HCT116 (cell line): ENCODE measurements at regions of chr1 and their contacts with region 1.

Region 1: DNA sequence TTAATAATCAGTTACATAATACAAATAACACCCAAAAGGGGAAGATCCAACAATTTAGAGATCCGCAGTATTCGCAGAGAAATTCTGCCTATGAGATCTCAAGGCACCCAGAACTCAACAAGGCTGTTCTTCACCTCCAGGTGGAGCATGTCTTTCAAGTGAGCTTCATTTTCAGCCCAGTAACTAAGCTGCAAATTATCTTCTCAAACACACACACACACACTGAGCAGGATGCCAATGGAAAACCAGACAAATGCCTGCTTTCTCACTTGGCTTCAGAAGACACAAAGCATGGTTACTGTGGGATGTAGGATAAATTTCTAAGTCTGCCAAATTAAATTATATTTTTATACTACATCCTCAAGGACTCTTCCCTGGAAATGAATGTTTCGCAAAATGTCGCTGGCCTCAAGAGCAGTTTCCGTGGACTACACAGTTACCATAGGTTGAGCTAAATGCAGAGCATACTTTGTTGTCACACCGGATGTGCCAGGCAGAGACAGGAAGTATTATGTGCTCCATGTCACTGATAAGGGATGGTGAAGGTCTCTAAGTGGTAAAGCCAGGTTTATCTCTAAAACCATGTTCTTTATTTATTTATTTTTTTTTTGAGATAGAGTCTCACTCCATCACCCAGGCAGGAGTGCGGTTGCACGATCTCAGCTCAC is 30.3 kb downstream of the UBR4 start:
- DNase-seq: peak; percentile 3
- ATAC-seq: peak; percentile 74
- H3K4me3 ChIP-seq: no peak overlapping the region
- H3K27ac ChIP-seq: no peak overlapping the region
- H3K4me1 ChIP-seq: no peaks in the 10 kb centered on the region
- H3K27me3 ChIP-seq: no peaks in the 10 kb centered on the region
- CTCF ChIP-seq: peak; percentile 26 to 46 (median 40); a peak in 5 of 6 replicates
- POLR2A ChIP-seq: no peak
- RAD21 ChIP-seq: no peak

Region 2: DNA sequence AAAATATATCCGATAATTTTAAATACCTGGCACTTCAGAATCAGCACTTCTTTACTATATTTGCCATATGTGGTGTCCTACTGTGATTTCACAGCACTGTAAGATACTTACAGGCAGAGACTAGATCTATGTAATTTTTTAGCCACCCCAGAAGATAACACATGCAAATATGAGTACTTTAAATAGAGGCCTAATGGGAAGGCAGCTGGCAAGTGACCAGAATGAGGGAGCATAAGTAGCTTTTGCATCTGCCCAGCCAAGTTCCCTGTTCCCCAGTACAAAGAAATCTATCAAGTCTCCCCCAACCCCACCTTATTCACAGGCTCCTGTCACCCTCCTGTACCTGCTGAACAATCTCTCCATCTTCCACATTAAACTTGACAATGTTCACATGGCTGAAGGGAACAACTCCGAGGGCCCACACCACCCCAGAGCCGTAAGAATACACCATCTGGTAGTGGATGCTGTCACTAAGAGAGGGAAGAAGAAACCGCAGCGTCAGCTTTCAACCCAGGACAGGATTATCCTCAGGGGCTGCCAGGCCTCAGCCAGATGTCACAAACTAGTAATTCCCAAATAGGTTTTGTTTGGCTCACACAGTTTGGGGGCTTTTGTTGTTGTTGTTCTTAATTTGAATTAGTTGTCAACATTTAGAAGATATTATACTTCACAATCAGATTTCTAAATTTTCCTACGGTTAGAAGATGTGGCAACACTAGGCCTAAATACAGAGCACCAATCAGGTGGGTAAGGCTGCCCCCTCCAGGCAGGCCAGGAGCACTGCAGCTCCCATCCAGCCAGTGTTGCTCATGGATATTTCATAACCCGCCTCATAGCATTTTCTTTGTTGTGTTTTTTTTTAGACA is 61.2 kb after region 1 on chr1:
- CTCF ChIA-PET with region 1: interaction called, 4 read pairs
- POLR2A ChIA-PET with region 1: no interaction called
- RAD21 ChIA-PET with region 1: no interaction called
- intact Hi-C with region 1: loop called (anchors 1 kb)
- DNase-seq: peak; percentile 18
- ATAC-seq: peak; percentile 95
- H3K4me3 ChIP-seq: no peak overlapping the region
- H3K27ac ChIP-seq: no peak overlapping the region
- H3K4me1 ChIP-seq: no peaks in the 10 kb centered on the region
- H3K27me3 ChIP-seq: no peaks in the 10 kb centered on the region
- CTCF ChIP-seq: peak; percentile 72 to 96 (median 92)
- POLR2A ChIP-seq: no peak
- RAD21 ChIP-seq: peak; percentile 81

Region 3: DNA sequence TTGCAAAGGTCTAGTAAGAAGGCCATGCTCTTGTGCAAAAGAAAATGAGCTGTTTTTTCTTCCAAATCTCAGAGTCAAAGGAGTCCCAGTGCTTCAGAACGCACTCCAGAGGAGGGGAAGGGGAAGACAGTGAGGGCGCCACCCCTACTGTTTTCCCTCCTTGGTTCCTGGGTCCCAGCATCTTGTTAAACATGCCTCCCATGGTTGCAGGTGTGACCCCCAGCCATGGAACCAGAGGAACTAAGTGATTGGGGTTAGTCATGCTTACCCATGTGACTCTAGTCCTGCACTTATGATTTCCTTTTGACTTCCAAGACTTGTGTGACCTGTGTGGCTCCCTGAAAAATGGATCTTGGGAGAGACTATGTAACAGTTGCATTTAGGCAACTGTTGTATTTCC is 114.9 kb after region 1 on chr1:
- CTCF ChIA-PET with region 1: no interaction called
- POLR2A ChIA-PET with region 1: no interaction called
- RAD21 ChIA-PET with region 1: no interaction called
- intact Hi-C with region 1: no loop called
- DNase-seq: no peak
- ATAC-seq: no peak
- H3K4me3 ChIP-seq: no peak overlapping the region
- H3K27ac ChIP-seq: no peak overlapping the region
- H3K4me1 ChIP-seq: no peaks in the 10 kb centered on the region
- H3K27me3 ChIP-seq: no peaks in the 10 kb centered on the region
- CTCF ChIP-seq: no peak
- POLR2A ChIP-seq: no peak
- RAD21 ChIP-seq: no peak